ENCODE measurements at regions of chr11 and their contacts with region 1.

Region 1: GRCh38 chr11:69704508-69705253 is 859 bp upstream of the FGF19 start:
- DNase-seq: no peak
- ATAC-seq: no peak

Region 2: GRCh38 chr11:69615565-69616251 is 89.0 kb before region 1 on chr11:
- intact Hi-C with region 1: no loop called
- DNase-seq: no peak
- ATAC-seq: no peak

Region 3: DNA sequence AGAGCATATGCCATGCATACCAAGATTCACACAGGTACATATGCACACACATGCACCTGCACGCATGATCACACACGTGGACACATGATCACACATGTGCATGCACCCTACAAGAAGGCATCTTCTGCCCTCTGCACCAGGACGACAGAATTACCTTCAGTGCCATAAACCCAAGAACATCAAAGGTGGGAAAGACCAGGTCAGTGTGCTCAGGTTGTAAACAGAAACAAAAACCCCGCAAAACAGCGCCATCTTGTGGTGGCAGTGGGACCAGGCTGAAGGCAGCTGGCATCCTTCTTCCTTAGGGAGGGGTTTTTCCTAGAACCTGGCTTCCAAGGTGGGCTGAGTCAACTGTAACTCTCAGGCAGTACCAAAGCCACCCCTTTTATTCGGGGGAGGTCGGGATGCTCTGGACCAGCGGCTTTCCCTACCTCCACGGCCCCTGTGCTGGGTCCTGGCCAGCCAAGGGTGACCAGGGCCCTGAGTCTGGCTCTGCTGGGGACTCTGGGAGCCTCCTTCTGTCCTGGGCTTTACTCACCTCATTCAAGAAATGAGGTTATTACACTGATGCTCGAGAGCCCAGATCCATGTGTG is 183.9 kb after region 1 on chr11:
- intact Hi-C with region 1: loop called (anchors 10 kb)
- DNase-seq: peak; percentile 78
- ATAC-seq: peak; percentile 45